ENCODE measurements at regions of chr16 and their contacts with region 1.

Region 1: DNA sequence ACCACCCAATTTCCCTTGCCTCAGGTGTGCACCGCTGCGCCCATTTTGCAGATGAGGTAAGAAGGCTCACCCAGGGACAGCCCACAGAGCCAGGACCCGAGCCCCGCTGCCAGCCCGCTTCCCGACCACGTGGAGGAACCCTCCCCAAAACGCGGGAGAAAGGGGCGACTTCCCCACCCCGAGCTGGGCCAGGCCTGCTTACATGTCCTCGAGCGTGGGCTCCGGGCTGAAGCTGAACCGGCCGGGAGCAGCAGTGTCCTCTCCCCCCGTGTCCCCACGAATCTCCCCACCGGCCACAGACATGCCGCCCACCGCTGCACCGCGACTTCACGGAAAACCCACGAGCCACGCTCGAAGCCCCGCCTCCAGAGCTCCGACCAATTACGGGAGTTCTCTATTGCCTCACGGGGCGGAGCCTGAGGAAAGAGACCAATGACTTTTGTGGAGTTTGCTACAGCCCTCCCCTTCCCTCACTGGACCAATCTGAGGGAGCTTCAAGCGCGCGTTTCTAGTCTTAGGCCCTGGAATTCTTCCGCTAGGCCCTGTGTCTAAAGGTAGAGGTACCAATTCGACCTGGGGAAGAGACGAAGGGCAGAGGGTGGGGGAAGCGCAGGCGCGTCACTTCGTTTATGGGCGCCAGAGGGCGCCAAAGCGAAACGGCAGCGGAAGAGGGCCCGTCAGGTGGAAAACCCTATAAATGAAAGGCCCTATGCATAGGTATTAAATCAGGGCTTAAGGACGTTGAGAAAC is at the start of gene DCTPP1:
- DNase-seq: peak; percentile 98
- H3K4me3 Mint-ChIP-seq: no peak within 1 kb of the TSS
- H3K27ac Mint-ChIP-seq: no peak within 1 kb of the TSS
- H3K4me1 Mint-ChIP-seq: peaks cover 39% of the 10 kb centered on the region
- H3K27me3 Mint-ChIP-seq: no peaks in the 10 kb centered on the region
- total RNA-seq, gene DCTPP1: 69.9 to 73.0 TPM

Region 2: GRCh38 chr16:30407102-30407803 is 22.6 kb before region 1 on chr16 and contains the start of gene ZNF771:
- CTCF ChIA-PET with region 1: interaction called, 17 read pairs
- intact Hi-C with region 1: no loop called
- DNase-seq: peak; percentile 91
- H3K4me3 Mint-ChIP-seq: peak within 1 kb of the TSS; percentile 98
- H3K27ac Mint-ChIP-seq: peak within 1 kb of the TSS; percentile 93
- H3K4me1 Mint-ChIP-seq: peaks cover 32% of the 10 kb centered on the region
- H3K27me3 Mint-ChIP-seq: no peaks in the 10 kb centered on the region
- total RNA-seq, gene ZNF771: 3.4 to 4.7 TPM

Region 3: GRCh38 chr16:30458561-30459394 is 28.9 kb after region 1 on chr16:
- CTCF ChIA-PET with region 1: interaction called, 6 read pairs
- intact Hi-C with region 1: loop called (anchors 1 kb)
- DNase-seq: peak; percentile 95
- H3K4me3 Mint-ChIP-seq: peak overlapping the region; percentile 54
- H3K27ac Mint-ChIP-seq: peak overlapping the region; percentile 92
- H3K4me1 Mint-ChIP-seq: peaks cover 46% of the 10 kb centered on the region
- H3K27me3 Mint-ChIP-seq: no peaks in the 10 kb centered on the region

Region 4: DNA sequence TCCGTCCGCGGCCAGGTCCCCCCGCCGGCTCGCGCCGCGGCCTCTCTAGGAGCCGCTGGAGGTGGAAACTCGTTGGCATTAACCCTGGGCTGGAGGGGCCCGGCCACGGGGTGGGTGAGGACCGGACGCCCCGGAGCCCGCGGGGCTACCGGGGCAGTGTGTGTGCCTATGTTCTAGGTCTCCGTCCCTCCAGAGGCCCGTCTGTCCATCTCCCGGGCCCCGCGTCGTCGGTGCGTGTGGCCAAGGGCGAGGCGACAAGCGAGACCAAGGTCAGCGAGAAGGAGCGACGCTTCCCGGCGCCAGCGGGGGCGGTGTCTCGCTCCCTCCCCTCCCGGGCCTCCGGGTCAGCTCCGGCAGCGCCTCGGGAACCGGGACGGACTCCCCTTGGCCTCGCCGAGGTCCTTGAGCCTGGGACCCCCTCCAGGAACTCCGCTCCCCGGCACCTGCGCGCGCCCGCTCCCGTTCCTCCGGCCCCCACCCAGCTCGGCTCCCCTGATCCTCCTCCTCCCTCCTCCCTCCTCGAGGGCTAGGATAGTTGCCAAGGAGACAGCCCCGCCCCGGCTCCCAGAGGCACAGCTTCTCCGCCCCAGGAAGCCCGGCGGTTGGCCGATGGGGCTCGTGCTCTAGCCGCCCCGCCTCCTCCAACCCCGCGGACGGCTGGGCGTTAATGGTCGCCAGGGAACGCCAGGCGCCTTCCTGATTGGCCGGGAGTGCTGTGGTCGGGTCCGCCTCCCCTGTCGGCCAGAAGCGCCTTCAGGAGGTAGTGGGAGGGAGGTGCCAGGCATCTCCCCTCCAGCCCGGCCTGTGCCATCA is 97.2 kb after region 1 on chr16:
- CTCF ChIA-PET with region 1: interaction called, 4 read pairs
- intact Hi-C with region 1: loop called (anchors 2 kb)
- DNase-seq: peak; percentile 97
- H3K4me3 Mint-ChIP-seq: peak overlapping the region; percentile 72
- H3K27ac Mint-ChIP-seq: peak overlapping the region; percentile 75
- H3K4me1 Mint-ChIP-seq: peaks cover 36% of the 10 kb centered on the region
- H3K27me3 Mint-ChIP-seq: no peaks in the 10 kb centered on the region

Region 5: GRCh38 chr16:30585400-30586189 is 155.7 kb after region 1 on chr16 and contains the start of gene ZNF785:
- CTCF ChIA-PET with region 1: interaction called, 5 read pairs
- intact Hi-C with region 1: loop called (anchors 1 kb)
- DNase-seq: peak; percentile 98
- H3K4me3 Mint-ChIP-seq: peak within 1 kb of the TSS; percentile 90
- H3K27ac Mint-ChIP-seq: peak within 1 kb of the TSS; percentile 90
- H3K4me1 Mint-ChIP-seq: peaks cover 32% of the 10 kb centered on the region
- H3K27me3 Mint-ChIP-seq: no peaks in the 10 kb centered on the region
- total RNA-seq, gene ZNF785: 11.9 to 13.2 TPM

Region 6: GRCh38 chr16:30615358-30616091 is 185.7 kb after region 1 on chr16:
- CTCF ChIA-PET with region 1: interaction called, 25 read pairs
- intact Hi-C with region 1: loop called (anchors 1 kb)
- DNase-seq: peak; percentile 91
- H3K4me3 Mint-ChIP-seq: no peak overlapping the region
- H3K27ac Mint-ChIP-seq: no peak overlapping the region
- H3K4me1 Mint-ChIP-seq: peaks cover 3% of the 10 kb centered on the region
- H3K27me3 Mint-ChIP-seq: no peaks in the 10 kb centered on the region

Measured in activated naive CD4-positive, alpha-beta T cell treated with anti-CD3 and anti-CD28 coated beads for 36 hours (primary cell).